ENCODE measurements at regions of chr11 and their contacts with region 1.

Region 1: DNA sequence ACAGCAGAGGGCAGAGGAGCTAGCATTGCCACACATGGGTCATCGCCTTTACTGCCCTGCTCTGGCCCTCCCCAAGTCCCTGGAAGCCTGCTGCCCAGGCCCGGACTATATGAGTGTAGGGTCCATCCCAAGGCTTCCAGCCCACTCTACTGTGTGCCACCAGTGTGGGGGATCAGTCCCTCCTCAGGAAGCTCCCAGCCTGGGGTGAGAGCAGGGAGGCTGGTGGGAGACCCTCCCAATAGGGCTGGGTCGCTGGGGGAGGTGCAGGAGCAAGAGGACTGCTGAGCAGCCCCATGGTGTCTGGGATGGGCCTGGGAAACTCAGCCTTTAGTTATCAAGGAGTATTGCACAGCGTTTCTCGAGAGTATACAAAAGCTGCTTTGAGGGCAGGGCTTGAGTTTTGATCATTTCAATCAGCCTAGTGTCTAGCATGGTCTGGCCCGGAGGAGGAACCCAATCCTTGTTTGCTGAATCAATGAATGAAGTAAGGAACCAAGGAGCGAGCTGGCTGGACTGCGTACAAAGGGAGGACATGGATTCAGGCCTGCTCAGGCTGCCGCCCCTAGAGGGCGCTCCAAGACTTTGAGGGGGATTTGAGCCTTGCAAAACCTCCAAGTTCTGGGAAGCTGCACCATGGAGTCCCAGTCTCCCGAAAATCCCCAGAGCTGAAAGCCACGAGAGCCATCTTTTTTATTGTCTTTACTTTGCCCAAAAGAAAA is 89.0 kb upstream of the PARVA start:
- DNase-seq: peak; percentile 69
- ATAC-seq: peak; percentile 58
- H3K4me3 Mint-ChIP-seq: no peak overlapping the region
- H3K27ac Mint-ChIP-seq: no peak overlapping the region
- H3K4me1 Mint-ChIP-seq: peaks cover 4% of the 10 kb centered on the region
- H3K27me3 Mint-ChIP-seq: no peaks in the 10 kb centered on the region
- CTCF ChIP-seq: peak; percentile 90

Region 2: GRCh38 chr11:12052676-12053605 is 235.4 kb before region 1 on chr11:
- CTCF ChIA-PET with region 1: interaction called, 167 read pairs
- POLR2A ChIA-PET with region 1: no interaction called
- intact Hi-C with region 1: no loop called
- DNase-seq: peak; percentile 58
- ATAC-seq: peak; percentile 71
- H3K4me3 Mint-ChIP-seq: no peak overlapping the region
- H3K27ac Mint-ChIP-seq: no peak overlapping the region
- H3K4me1 Mint-ChIP-seq: no peaks in the 10 kb centered on the region
- H3K27me3 Mint-ChIP-seq: no peaks in the 10 kb centered on the region
- CTCF ChIP-seq: no peak

Region 3: DNA sequence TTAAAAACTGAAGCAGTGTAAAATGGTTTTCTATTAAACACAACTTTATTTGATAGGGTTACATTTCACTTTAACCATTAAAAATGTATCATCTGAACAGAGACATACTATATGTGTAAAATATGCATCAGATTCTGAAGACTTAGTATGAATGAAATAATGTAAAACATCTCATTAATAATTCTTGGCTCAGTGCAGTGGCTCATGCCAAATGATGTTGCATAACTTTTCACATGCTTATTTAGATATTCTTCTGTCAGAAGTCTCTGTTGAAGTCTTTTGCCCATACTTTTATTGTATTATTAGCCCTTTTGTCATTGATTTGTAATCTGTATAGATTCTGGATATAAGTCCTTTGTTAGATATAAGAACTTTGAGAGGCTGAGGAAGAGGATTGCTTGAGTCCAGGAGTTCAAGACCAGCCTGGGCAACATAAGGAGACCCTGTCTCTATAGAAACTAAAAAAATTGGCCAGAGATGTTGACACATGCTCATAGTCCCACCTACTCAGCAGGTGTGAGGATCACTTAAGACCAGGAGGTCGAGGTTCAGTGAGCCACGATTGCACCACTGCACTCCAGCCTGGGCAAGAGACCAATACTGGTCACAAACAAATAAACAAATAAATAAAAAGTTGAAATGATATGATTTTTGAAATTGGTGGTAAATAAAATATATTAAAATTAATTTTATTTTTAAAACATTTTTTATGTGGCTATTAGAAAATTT is 15.2 kb after region 1 on chr11:
- CTCF ChIA-PET with region 1: interaction called, 18 read pairs
- POLR2A ChIA-PET with region 1: no interaction called
- intact Hi-C with region 1: no loop called
- DNase-seq: no peak
- ATAC-seq: no peak
- H3K4me3 Mint-ChIP-seq: no peak overlapping the region
- H3K27ac Mint-ChIP-seq: no peak overlapping the region
- H3K4me1 Mint-ChIP-seq: no peaks in the 10 kb centered on the region
- H3K27me3 Mint-ChIP-seq: no peaks in the 10 kb centered on the region
- CTCF ChIP-seq: no peak

Region 4: GRCh38 chr11:12461516-12461915 is 173.1 kb after region 1 on chr11:
- CTCF ChIA-PET with region 1: no interaction called
- POLR2A ChIA-PET with region 1: no interaction called
- intact Hi-C with region 1: no loop called
- DNase-seq: no peak
- ATAC-seq: no peak
- H3K4me3 Mint-ChIP-seq: no peak overlapping the region
- H3K27ac Mint-ChIP-seq: no peak overlapping the region
- H3K4me1 Mint-ChIP-seq: no peaks in the 10 kb centered on the region
- H3K27me3 Mint-ChIP-seq: no peaks in the 10 kb centered on the region
- CTCF ChIP-seq: no peak

Region 5: DNA sequence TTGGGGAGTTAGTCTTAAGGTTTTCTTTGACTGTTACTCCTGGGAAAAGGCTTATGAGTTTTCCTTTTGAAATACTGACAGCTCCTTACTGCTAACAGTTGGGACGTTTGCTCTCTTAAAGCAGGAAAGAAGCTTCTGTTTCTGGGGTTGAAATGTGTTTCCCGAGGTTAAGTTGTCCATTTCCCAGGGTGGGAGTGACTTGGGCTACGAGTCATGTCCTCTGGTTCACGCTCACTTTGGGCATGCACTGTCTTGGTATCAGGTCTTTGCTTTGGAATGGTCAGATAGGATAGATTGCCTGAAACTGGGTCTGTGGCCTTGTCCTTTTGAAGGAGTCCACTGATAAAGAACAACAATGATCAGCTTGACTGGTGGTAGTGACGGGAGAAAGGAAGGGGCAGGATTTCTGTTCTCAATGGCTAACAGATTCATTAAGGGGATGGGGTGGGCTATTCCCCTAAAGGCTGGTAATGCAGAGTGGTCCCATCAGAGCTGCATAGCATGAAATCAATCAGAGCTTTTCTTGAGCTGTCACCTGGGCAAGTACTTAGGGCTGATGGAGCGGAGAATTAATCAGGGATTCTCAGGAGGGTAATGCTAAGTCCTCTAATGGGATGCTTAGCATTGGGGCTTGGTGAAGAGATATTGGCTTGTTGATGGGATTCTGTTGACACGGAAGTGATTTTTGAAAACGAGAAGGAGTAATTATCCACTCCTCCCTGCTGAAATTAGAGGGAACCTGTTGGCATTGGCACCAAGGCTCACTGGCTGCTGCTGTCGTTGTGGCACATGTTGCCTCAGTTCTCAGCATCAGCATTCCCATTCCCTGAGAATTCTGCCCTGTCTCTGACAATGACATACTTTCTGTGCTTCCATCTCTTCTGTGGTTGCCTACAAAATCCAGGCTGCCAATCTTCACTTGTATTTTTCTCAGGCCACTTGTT is 467.4 kb after region 1 on chr11:
- CTCF ChIA-PET with region 1: no interaction called
- POLR2A ChIA-PET with region 1: no interaction called
- intact Hi-C with region 1: no loop called
- DNase-seq: no peak
- ATAC-seq: no peak
- H3K4me3 Mint-ChIP-seq: no peak overlapping the region
- H3K27ac Mint-ChIP-seq: no peak overlapping the region
- H3K4me1 Mint-ChIP-seq: no peaks in the 10 kb centered on the region
- H3K27me3 Mint-ChIP-seq: peaks cover 10% of the 10 kb centered on the region
- CTCF ChIP-seq: no peak